CD8-positive, alpha-beta T cell (primary cell): ENCODE measurements at regions of chr15 and their contacts with region 1.

Region 1: GRCh38 chr15:68277603-68278344 is at the start of gene FEM1B:
- DNase-seq: peak; percentile 73 to 96 (median 86)
- ATAC-seq: peak; percentile 76
- H3K4me3 ChIP-seq: peak within 1 kb of the TSS; percentile 90 to 93
- H3K4me3 Mint-ChIP-seq: peak within 1 kb of the TSS; percentile 98
- H3K27ac ChIP-seq: peak within 1 kb of the TSS; percentile 92 to 98
- H3K27ac Mint-ChIP-seq: peak within 1 kb of the TSS; percentile 98
- H3K4me1 ChIP-seq: peaks cover 47% of the 10 kb centered on the region
- H3K4me1 Mint-ChIP-seq: peaks cover 60% of the 10 kb centered on the region
- H3K27me3 ChIP-seq: no peaks in the 10 kb centered on the region
- H3K27me3 Mint-ChIP-seq: no peaks in the 10 kb centered on the region
- CTCF ChIP-seq: no peak
- total RNA-seq, gene FEM1B: 89.7 to 90.6 TPM

Region 2: GRCh38 chr15:66700802-66701421 is 1576.9 kb before region 1 on chr15:
- CTCF ChIA-PET with region 1: no interaction called
- POLR2A ChIA-PET with region 1: no interaction called
- intact Hi-C with region 1: loop called in 1 of 2 experiments (anchors 5 kb)
- DNase-seq: peak; percentile 62 to 87 (median 81)
- ATAC-seq: peak; percentile 81
- H3K4me3 ChIP-seq: peak overlapping the region; percentile 70 to 77
- H3K4me3 Mint-ChIP-seq: peak overlapping the region; percentile 94
- H3K27ac ChIP-seq: no peak overlapping the region
- H3K27ac Mint-ChIP-seq: peak overlapping the region; percentile 73
- H3K4me1 ChIP-seq: peaks cover 20% of the 10 kb centered on the region
- H3K4me1 Mint-ChIP-seq: peaks cover 21% of the 10 kb centered on the region
- H3K27me3 ChIP-seq: peaks cover 8 to 14% of the 10 kb centered on the region in 2 experiments
- H3K27me3 Mint-ChIP-seq: peaks cover 12% of the 10 kb centered on the region
- CTCF ChIP-seq: no peak

Region 3: DNA sequence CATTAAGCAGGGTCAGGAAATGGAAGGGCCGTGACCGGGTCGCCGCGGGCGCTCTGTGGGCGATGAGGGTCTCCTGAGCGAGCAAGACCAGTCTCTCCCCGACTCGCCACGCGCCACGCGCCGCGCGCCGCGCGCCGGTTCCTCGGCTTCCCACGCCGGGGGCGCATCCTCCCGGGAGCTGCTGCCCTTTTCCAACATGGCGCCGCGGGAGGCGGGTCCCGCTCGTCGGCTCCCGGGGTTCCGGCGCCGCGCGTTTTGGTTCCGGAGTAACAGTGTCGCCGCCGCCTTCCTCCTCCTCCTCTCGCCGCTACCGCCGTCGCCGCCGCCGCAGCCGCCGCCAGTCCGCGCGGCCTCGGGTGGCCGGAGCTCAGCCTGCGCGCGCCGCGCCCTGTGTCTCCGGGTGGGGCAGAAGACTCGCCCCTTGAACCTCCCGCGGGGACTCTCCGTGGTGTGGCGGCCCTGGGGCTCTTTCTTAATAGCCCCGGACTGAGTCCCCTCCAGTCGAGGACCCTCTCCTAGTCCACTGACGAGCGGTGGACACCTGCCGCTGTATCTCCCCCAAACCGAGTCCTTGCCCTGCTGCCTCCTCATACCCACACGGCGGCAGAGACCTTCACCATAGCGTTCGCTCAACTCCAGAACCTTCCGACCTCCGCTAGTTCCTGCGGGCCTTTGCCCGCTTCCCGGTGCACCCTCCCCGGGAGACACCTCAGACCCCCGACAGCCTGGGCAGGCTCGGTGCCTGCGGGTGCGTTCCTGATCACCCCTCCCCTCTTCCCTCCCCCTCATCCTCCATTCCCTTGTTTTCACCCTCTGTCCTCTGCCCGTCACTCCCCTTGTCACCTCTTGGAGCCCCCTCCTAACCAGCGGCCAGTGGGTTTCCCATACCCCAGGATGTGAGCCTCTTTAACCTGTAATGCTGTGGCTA is 735.1 kb before region 1 on chr15 and contains the start of gene MAP2K5:
- CTCF ChIA-PET with region 1: no interaction called
- POLR2A ChIA-PET with region 1: interaction called, 5 read pairs
- intact Hi-C with region 1: loop called (anchors 5 kb)
- DNase-seq: peak; percentile 57 to 91 (median 82)
- ATAC-seq: peak; percentile 71
- H3K4me3 ChIP-seq: peak within 1 kb of the TSS; percentile 91 to 93
- H3K4me3 Mint-ChIP-seq: peak within 1 kb of the TSS; percentile 97
- H3K27ac ChIP-seq: peak within 1 kb of the TSS; percentile 81 to 86
- H3K27ac Mint-ChIP-seq: peak within 1 kb of the TSS; percentile 99
- H3K4me1 ChIP-seq: peaks cover 24% of the 10 kb centered on the region
- H3K4me1 Mint-ChIP-seq: peaks cover 56% of the 10 kb centered on the region
- H3K27me3 ChIP-seq: no peaks in the 10 kb centered on the region
- H3K27me3 Mint-ChIP-seq: no peaks in the 10 kb centered on the region
- CTCF ChIP-seq: no peak
- total RNA-seq, gene MAP2K5: 20.5 to 21.2 TPM

Region 4: GRCh38 chr15:68187559-68187958 is 90.2 kb before region 1 on chr15:
- CTCF ChIA-PET with region 1: no interaction called
- POLR2A ChIA-PET with region 1: no interaction called
- intact Hi-C with region 1: no loop called
- DNase-seq: no peak
- ATAC-seq: no peak
- H3K4me3 ChIP-seq: no peak overlapping the region
- H3K4me3 Mint-ChIP-seq: no peak overlapping the region
- H3K27ac ChIP-seq: no peak overlapping the region
- H3K27ac Mint-ChIP-seq: no peak overlapping the region
- H3K4me1 ChIP-seq: no peaks in the 10 kb centered on the region
- H3K4me1 Mint-ChIP-seq: no peaks in the 10 kb centered on the region
- H3K27me3 ChIP-seq: no peaks in the 10 kb centered on the region
- H3K27me3 Mint-ChIP-seq: no peaks in the 10 kb centered on the region
- CTCF ChIP-seq: no peak

Region 5: GRCh38 chr15:68252925-68253534 is 24.7 kb before region 1 on chr15:
- CTCF ChIA-PET with region 1: interaction called, 6 read pairs
- POLR2A ChIA-PET with region 1: interaction called, 12 read pairs
- intact Hi-C with region 1: loop called in 1 of 2 experiments (anchors 1 kb)
- DNase-seq: peak in 6 of 9 experiments; percentile 9 to 74 (median 38)
- ATAC-seq: peak; percentile 80
- H3K4me3 ChIP-seq: no peak overlapping the region
- H3K4me3 Mint-ChIP-seq: no peak overlapping the region
- H3K27ac ChIP-seq: no peak overlapping the region
- H3K27ac Mint-ChIP-seq: no peak overlapping the region
- H3K4me1 ChIP-seq: no peaks in the 10 kb centered on the region
- H3K4me1 Mint-ChIP-seq: peaks cover 8% of the 10 kb centered on the region
- H3K27me3 ChIP-seq: peaks cover 0 to 2% of the 10 kb centered on the region in 2 experiments
- H3K27me3 Mint-ChIP-seq: peaks cover 6% of the 10 kb centered on the region
- CTCF ChIP-seq: peak; percentile 95

Region 6: DNA sequence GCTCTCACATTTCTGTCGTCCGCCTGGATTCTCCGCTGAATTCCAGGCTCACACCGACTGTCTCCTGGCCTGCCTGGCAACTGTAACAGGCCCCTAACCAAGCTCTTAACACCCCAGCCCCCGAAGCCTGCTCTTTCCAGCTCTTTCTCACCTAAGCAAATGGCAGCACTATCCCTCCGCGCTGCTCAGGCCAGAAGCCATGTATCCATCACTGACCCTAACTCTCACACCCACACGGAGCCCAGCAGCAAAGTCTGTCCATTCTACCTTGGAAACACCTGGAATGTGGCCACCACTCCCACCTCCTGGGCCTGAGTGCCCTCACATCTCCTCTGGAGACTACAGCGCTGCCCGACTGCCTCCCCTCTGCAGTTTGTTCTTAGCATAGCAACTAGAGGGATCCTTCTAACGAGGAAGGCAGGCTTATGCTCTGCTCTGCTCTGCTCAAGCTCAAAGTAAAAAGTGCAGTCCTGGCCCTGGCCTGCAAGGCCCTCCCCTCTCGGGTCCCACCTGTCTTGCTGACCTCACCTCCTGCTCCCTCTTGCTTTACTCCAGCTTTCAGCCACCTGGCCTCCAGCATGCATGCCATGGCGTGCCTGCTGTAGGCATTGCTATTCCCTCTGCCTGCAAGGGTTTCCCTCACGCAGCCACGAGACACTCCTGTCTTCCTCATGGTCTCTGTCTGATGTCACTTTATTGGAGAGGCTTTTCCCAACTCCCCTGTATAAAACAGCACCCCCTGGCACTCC is 27.0 kb after region 1 on chr15:
- CTCF ChIA-PET with region 1: interaction called, 19 read pairs
- POLR2A ChIA-PET with region 1: interaction called, 26 read pairs
- intact Hi-C with region 1: loop called (anchors 2 kb)
- DNase-seq: peak in 1 of 9 experiments; percentile 6
- ATAC-seq: no peak
- H3K4me3 ChIP-seq: no peak overlapping the region
- H3K4me3 Mint-ChIP-seq: no peak overlapping the region
- H3K27ac ChIP-seq: no peak overlapping the region
- H3K27ac Mint-ChIP-seq: no peak overlapping the region
- H3K4me1 ChIP-seq: peaks cover 14% of the 10 kb centered on the region
- H3K4me1 Mint-ChIP-seq: peaks cover 21% of the 10 kb centered on the region
- H3K27me3 ChIP-seq: peaks cover 0 to 5% of the 10 kb centered on the region in 2 experiments
- H3K27me3 Mint-ChIP-seq: peaks cover 4% of the 10 kb centered on the region
- CTCF ChIP-seq: no peak